ENCODE measurements at regions of chr6 and their contacts with region 1.

Region 1: DNA sequence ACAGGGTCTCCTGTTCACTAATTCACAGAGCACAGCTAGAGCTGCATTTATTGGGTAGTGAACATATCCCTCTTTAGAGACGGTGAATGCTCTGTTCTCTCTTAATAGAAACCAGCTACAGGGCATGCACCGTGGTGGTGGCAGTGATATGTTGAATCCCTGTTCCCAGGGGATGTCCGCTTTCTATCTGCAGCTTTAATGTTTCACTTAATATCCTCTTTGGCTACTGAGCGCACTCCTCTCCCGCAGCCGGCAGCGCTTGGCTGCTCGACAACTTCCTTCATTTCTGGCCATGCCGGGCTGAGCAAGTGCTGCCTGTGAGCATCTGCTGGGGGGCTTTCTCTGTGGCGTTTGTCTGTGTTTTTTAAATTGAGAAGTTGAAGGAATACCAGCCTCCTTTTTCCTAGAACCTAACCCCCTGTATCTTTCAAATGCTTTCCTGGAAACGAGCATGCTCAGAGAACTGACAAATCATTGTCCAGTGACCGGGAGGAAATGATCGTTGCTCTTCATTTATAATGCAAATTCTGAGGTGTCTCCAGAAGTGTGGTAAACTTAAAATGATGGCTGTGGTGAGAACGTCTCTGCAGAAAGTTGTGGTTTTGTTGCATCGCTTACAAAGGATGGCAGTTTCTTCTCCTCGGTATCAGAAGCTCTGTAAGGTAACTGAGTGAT is 297.9 kb downstream of the UTRN start:
- DNase-seq: peak; percentile 29
- ATAC-seq: peak; percentile 80
- H3K4me3 Mint-ChIP-seq: peak overlapping the region; percentile 81
- H3K27ac Mint-ChIP-seq: peak overlapping the region; percentile 59
- H3K4me1 Mint-ChIP-seq: peaks cover 30% of the 10 kb centered on the region
- H3K27me3 Mint-ChIP-seq: no peaks in the 10 kb centered on the region
- CTCF ChIP-seq: no peak

Region 2: DNA sequence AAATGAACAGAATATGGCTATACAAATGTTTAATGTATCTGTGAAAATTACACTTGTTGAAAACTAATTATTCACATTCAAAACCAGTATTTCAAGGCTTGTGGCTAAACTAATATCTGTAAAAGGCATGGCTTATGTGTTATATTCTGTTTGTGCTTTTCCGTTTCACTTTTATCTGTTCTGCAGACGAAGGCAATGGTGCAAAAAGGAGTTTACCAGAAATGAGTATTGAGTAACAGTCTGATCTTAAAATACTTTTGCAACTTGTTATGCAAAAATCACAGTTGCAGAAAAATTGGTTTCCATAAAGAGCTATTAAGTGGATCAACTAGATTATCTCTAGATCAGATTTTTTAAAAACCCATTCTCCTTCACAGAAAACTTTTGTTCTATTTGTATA is 442.2 kb before region 1 on chr6:
- CTCF ChIA-PET with region 1: no interaction called
- POLR2A ChIA-PET with region 1: no interaction called
- intact Hi-C with region 1: no loop called
- DNase-seq: no peak
- ATAC-seq: peak; percentile 25
- H3K4me3 Mint-ChIP-seq: no peak overlapping the region
- H3K27ac Mint-ChIP-seq: no peak overlapping the region
- H3K4me1 Mint-ChIP-seq: peaks cover 15% of the 10 kb centered on the region
- H3K27me3 Mint-ChIP-seq: no peaks in the 10 kb centered on the region
- CTCF ChIP-seq: no peak

Region 3: DNA sequence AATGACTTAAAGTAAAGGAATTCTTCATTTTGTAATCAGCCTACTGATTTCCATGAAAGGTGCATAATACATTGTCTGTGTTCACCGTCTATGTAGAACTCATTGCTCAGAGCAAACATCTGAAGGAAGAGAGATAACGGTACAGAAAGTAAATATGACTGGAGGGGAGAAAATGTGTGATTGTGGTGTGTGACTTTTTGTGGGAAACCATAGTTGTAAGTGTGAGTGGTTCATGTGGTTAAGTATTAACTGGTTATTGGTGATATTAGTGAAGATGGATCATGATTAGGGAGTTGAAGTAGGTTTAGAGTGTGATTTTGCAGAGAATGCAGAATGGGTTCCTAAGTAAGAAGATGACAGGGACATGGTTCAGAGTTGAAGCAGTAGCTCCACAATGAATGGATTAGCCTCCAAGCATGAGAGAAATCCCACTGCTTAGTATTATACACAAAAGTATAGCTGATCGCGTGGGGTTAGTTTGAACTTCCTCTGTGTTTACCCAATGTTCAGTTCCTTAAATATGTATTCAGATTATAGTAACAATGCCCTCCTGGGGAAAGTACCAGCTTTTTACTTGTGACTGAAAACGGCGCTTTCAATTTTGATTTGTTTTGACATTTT is 70.9 kb after region 1 on chr6:
- CTCF ChIA-PET with region 1: interaction called, 5 read pairs
- POLR2A ChIA-PET with region 1: interaction called, 5 read pairs
- intact Hi-C with region 1: loop called (anchors 1 kb)
- DNase-seq: no peak
- ATAC-seq: peak; percentile 93
- H3K4me3 Mint-ChIP-seq: peak overlapping the region; percentile 69
- H3K27ac Mint-ChIP-seq: peak overlapping the region; percentile 88
- H3K4me1 Mint-ChIP-seq: peaks cover 57% of the 10 kb centered on the region
- H3K27me3 Mint-ChIP-seq: no peaks in the 10 kb centered on the region
- CTCF ChIP-seq: no peak

Region 4: DNA sequence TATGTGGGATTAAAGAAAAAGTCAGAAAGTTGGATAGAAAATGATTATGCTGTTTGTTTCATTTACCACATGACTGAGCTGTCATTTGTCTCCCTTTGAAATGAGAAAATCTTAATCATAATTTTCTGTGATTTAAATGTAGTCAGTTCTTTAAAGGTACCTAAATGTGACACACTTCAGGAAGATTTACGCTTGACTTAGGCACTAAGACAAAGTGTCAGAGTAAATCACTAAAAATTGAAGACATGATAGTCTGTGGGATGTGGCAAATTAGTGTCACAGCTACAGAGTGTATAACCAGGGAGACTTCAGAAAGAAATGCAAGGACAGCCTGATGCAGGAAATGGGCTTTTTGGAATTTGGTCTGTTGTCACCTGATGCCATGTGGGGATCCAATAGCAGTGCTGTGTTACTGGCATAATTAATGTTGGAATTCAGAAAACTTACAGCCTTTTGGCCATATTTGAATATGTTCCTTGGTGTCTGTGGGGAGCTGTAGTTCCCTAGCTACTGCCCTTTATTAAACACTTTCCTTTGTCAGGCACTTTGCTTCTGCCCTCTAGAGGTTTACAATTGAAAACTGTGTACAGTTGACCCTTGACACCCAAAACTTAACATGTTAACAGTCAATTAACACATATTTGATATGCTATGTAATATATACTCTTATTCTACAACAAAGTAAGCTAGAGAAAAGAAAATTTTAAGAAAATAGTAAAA is 195.9 kb after region 1 on chr6:
- CTCF ChIA-PET with region 1: interaction called, 20 read pairs
- POLR2A ChIA-PET with region 1: no interaction called
- intact Hi-C with region 1: loop called (anchors 1 kb)
- DNase-seq: no peak
- ATAC-seq: no peak
- H3K4me3 Mint-ChIP-seq: no peak overlapping the region
- H3K27ac Mint-ChIP-seq: no peak overlapping the region
- H3K4me1 Mint-ChIP-seq: no peaks in the 10 kb centered on the region
- H3K27me3 Mint-ChIP-seq: no peaks in the 10 kb centered on the region
- CTCF ChIP-seq: no peak

Region 5: DNA sequence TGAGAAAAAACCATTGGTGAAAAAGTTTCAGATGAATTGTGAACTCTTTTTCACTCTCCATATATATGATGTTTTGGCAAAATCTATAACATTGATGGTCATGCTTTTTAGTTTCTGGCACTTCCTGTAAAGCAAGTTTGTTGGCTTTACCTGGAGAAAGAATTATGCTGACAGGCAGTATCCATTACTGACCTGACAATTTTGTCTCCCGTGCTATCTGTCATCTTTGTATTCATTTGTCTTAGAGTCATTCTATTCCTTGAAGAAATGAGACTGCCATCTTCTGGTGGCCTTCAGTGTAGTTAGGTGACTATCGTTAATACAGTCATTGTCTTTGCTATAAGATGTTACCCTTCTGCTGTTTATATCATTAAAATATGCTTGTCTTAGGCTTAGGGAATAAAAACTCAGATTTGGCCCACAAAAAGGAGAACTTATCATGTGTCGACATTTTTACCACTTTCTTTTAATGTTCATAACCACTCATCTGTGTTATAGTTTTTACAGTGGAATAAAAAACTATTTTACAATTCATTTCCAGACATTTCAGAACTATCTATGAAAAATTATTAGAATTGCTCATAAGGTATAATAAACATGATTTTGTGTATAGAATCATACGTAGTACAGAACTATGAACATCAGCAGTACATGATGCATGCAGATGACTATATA is 445.2 kb after region 1 on chr6:
- CTCF ChIA-PET with region 1: interaction called, 3 read pairs
- POLR2A ChIA-PET with region 1: no interaction called
- intact Hi-C with region 1: loop called (anchors 1 kb)
- DNase-seq: no peak
- ATAC-seq: no peak
- H3K4me3 Mint-ChIP-seq: no peak overlapping the region
- H3K27ac Mint-ChIP-seq: no peak overlapping the region
- H3K4me1 Mint-ChIP-seq: no peaks in the 10 kb centered on the region
- H3K27me3 Mint-ChIP-seq: peaks cover 5% of the 10 kb centered on the region
- CTCF ChIP-seq: no peak

Region 6: GRCh38 chr6:145633981-145634627 is 1051.0 kb after region 1 on chr6:
- CTCF ChIA-PET with region 1: interaction called, 6 read pairs
- POLR2A ChIA-PET with region 1: no interaction called
- intact Hi-C with region 1: loop called (anchors 1 kb)
- DNase-seq: peak; percentile 56
- ATAC-seq: peak; percentile 71
- H3K4me3 Mint-ChIP-seq: no peak overlapping the region
- H3K27ac Mint-ChIP-seq: no peak overlapping the region
- H3K4me1 Mint-ChIP-seq: peaks cover 6% of the 10 kb centered on the region
- H3K27me3 Mint-ChIP-seq: no peaks in the 10 kb centered on the region
- CTCF ChIP-seq: peak; percentile 45

Measured in activated B cell treated with CpG ODN at 0.5 μM for 24 hours (primary cell).